Endothelial cell of umbilical vein (primary cell): ENCODE measurements at regions of chr13 and their contacts with region 1.

Region 1: GRCh38 chr13:50410921-50411712 is 395.9 kb downstream of the KCNRG start:
- DNase-seq: peak; percentile 94
- H3K4me3 ChIP-seq: no peak overlapping the region
- H3K27ac ChIP-seq: peak overlapping the region; percentile 46
- H3K4me1 ChIP-seq: peaks cover 21% of the 10 kb centered on the region
- H3K27me3 ChIP-seq: no peaks in the 10 kb centered on the region
- CTCF ChIP-seq: no peak
- POLR2A ChIP-seq: no peak

Region 2: GRCh38 chr13:50421473-50422130 is 10.5 kb after region 1 on chr13:
- CTCF ChIA-PET with region 1: interaction called, 4 read pairs
- POLR2A ChIA-PET with region 1: no interaction called
- dilution Hi-C with region 1: no loop called
- intact Hi-C with region 1: loop called (anchors 1 kb)
- DNase-seq: peak; percentile 91
- H3K4me3 ChIP-seq: peak overlapping the region in 1 of 3 experiments; percentile 9
- H3K27ac ChIP-seq: peak overlapping the region; percentile 57
- H3K4me1 ChIP-seq: peaks cover 19% of the 10 kb centered on the region
- H3K27me3 ChIP-seq: no peaks in the 10 kb centered on the region
- CTCF ChIP-seq: no peak
- POLR2A ChIP-seq: no peak

Region 3: DNA sequence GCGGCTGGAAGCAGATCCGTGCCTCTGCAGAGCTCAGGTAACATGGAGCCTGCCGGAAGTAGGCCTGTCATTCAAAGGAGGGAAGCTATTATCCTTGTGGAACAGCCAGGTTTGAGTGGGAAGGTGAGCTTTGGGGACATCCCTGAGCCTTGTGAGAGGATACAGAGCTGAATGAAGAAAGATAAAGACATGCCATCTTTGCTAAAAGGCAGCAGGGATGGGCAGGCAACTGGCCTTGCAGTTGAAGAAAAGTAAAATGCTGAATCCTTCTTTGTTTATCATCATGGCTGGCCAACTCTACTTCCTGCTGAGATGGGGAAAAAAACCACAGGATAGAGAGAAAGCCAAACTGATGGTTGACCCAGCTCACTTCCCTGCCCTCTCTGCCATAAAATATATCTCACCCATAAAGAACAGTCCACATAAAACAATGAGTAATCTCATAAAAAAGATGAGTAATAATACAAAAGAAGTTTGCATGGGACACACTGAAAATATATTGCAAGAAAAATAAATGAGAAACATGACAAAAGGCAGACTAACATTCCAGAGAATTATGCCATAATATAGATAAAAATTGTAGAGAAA is 206.1 kb after region 1 on chr13:
- CTCF ChIA-PET with region 1: no interaction called
- POLR2A ChIA-PET with region 1: no interaction called
- dilution Hi-C with region 1: no loop called
- intact Hi-C with region 1: no loop called
- DNase-seq: peak; percentile 92
- H3K4me3 ChIP-seq: no peak overlapping the region
- H3K27ac ChIP-seq: peak overlapping the region; percentile 51
- H3K4me1 ChIP-seq: peaks cover 21% of the 10 kb centered on the region
- H3K27me3 ChIP-seq: no peaks in the 10 kb centered on the region
- CTCF ChIP-seq: no peak
- POLR2A ChIP-seq: no peak

Region 4: GRCh38 chr13:51348069-51348967 is 937.2 kb after region 1 on chr13:
- CTCF ChIA-PET with region 1: no interaction called
- POLR2A ChIA-PET with region 1: no interaction called
- dilution Hi-C with region 1: no loop called
- intact Hi-C with region 1: no loop called
- DNase-seq: no peak
- H3K4me3 ChIP-seq: no peak overlapping the region
- H3K27ac ChIP-seq: no peak overlapping the region
- H3K4me1 ChIP-seq: no peaks in the 10 kb centered on the region
- H3K27me3 ChIP-seq: no peaks in the 10 kb centered on the region
- CTCF ChIP-seq: no peak
- POLR2A ChIP-seq: no peak